GM10248 (cell line): ENCODE measurements at regions of chr4 and their contacts with region 1.

Region 1: DNA sequence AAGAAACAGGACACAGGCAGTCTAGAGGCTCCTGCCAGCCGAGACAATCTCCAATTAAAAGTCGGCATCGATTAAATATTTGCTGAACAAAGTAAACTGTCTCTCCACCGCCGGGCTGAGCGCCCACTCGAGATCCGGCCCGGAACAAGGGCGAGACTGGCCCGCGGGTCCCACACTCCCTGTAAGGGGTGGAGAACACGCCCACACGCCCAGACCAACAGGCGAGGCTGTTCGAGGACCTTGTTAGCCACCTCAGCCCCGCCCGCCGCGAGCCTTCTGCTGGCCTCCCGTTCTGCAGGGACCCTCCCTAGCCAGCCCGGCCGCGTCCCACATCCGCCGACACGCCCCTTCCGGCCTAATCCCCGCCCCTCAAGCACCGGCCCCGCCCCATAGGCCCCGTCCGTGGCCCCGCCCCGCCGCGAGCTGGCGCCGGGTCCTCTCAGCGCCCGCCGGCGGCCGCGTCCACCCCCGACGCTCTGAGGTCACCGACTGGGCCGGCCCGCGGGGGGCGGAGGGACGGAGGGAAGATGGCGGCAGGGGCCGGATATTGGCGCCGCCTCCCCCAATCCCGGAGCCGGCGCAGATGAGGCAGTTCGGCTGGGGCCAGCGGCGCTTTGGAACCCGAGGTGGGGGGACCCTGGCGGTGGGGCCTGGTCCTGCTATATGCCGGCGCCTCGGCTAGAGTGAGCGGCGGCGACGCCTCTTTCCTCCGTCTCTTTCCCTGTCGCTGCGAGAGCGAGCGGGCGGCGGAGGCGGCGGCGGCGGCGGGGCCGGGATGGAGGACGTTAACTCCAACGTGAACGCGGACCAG is at the start of gene SLAIN2:
- DNase-seq: peak; percentile 98
- CTCF ChIP-seq: no peak

Region 2: DNA sequence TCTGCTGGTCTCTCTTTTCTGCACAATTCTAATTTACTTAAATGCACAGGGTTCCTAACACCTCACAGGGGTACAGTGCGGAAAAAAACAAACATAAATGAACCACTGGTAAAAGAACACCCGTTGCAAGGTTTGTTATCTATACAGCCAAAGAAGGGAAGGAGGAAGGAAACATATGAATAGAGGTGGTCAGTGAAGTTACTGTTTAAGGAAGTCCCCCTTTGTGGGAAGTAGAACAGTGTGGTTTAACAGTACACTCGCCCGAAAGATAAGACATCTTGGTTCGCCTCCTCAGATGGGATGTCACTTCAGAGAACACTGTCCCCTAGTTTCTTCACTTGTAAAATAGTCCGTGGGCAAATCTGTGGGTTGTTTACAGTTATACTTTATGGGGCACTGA is 129.0 kb before region 1 on chr4:
- CTCF ChIA-PET with region 1: no interaction called
- POLR2A ChIA-PET with region 1: no interaction called
- DNase-seq: peak; percentile 42
- CTCF ChIP-seq: no peak

Region 3: DNA sequence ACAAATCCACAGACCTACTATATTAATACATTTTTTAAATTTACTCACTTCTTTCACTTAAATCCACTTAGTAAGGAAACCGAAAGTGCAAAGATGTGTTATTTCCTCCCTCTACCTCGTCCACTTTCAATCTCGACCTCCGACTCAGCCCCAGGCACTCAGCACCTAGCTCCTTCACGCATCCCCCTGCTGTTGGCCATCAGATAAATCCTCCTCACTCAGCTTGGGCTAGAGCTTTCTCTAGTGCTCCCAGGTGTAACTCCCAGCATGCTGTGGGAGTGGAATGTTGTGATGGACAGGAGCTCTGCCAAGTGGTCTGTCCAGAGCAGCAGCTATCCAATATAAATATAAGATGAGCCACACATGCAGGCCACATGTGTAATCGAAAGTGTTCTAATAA is 44.8 kb before region 1 on chr4:
- CTCF ChIA-PET with region 1: no interaction called
- POLR2A ChIA-PET with region 1: no interaction called
- DNase-seq: peak; percentile 44
- CTCF ChIP-seq: no peak

Region 4: GRCh38 chr4:48329976-48330375 is 11.2 kb before region 1 on chr4:
- CTCF ChIA-PET with region 1: interaction called, 14 read pairs
- POLR2A ChIA-PET with region 1: interaction called, 4 read pairs
- DNase-seq: no peak
- CTCF ChIP-seq: no peak

Region 5: DNA sequence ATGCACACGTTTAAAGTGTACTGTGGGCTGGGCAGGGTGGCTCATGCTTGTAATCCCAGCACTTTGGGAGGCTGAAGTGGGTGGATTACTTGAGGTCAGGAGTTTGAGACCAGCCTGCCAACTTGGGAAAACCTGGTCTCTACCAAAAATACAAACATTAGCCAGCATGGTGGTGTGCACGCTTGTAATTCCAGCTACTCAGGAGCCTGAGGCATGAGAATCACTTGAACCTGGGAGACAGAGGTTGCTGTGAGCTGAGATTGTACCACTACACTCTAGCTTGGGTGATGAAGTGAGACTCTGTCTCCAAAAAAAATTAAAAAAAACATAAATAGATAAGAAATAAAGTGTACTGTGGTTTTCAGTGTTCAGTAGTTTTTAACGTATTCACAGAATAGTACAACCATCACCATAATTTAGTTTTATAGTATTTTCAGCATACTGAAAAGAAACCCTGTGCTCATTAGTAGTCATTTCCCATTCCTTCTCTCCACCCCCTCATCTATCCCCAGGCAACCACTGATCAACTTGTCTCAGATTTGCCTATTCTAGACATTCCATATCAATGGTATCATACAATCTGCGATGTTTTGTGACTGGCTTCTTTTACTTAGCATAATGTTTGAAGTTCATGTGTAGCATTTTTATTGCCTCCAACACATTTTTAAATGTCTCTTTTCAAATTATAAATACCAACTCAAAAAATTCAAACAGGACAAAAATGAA is 19.3 kb after region 1 on chr4:
- CTCF ChIA-PET with region 1: interaction called, 13 read pairs
- POLR2A ChIA-PET with region 1: no interaction called
- DNase-seq: no peak
- CTCF ChIP-seq: no peak